ENCODE measurements at regions of chr15 and their contacts with region 1.

Region 1: DNA sequence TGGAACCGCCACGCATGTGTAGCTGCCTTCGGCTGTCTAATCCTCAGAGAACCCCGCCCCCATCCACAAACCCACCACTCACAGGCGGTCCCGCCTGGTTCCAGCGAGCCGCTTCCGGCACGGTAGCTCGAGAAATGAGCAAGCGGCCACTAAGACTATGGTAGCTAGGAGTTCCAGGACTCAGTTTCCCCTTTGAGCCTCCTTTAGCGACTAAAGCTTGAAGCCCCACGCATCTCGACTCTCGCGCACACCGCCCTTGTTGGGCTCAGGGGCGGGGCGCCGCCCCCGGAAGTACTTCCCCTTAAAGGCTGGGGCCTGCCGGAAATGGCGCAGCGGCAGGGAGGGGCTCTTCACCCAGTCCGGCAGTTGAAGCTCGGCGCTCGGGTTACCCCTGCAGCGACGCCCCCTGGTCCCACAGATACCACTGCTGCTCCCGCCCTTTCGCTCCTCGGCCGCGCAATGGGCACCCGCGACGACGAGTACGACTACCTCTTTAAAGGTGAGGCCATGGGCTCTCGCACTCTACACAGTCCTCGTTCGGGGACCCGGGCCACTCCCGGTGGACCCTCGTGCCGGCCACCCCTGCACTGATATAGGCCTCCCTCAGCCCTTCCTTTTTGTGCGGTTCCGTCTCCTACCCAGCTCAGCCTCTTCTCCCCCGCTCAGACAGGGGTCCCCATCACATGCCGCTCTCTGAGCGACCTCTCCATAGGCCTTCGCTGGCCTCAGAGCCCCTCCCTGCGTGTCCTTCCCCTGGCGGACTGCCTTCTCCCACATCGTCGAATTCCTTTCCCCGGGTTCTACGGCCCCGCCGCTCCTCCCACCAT is at the start of gene RAB11A:
- DNase-seq: peak; percentile 94
- H3K4me3 Mint-ChIP-seq: peak within 1 kb of the TSS; percentile 99
- H3K27ac Mint-ChIP-seq: peak within 1 kb of the TSS; percentile 93
- H3K4me1 Mint-ChIP-seq: peaks cover 31% of the 10 kb centered on the region
- H3K27me3 Mint-ChIP-seq: peaks cover 4% of the 10 kb centered on the region
- total RNA-seq, gene RAB11A: 161 and 171 TPM in 2 replicates

Region 2: DNA sequence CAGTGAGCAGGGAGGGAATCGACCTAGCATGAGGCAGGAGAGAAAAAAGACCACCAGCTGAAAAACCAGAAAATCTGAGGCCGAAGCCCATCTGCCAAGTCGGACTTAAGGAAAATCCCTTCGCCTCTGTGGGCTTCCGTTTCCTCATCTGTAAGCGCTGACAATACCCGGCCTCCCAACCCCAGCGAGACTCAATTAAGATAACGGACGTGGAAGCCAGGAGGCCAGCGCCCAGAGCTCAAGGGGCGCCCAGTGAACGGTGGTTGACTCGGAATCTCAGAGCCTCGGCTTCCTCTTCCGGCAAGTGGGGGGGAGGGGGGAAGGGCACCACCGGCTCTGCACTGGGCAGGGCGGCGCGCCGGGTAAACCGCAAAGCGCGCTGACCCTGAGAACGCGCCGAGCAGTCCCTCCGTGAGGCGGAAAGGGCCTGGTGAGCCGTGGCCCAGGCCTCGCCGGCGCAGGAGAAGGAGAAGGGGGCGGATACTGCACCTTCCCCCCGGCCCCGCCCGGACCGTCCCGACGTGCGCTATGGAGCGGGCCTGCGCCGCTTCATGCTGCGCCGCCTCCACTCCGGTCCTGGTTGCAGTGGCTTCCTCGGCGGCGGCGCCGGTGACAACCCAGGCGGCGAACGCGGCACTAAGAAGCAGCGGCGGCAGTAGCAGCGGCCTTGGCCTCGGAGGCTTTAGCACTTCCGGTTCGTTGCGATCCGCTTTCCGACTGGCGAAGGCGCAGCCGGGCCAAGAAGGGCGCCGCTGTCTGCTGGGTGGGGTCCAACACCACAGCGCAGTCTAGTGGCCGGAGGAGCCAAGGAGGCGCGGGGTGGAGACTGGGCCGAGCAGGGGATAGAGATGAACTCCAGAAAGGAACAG is 352.1 kb before region 1 on chr15 and contains the start of gene DPP8:
- intact Hi-C with region 1: loop called (anchors 2 kb)
- DNase-seq: peak; percentile 92
- H3K4me3 Mint-ChIP-seq: peak within 1 kb of the TSS; percentile 90
- H3K27ac Mint-ChIP-seq: peak within 1 kb of the TSS; percentile 90
- H3K4me1 Mint-ChIP-seq: peaks cover 32% of the 10 kb centered on the region
- H3K27me3 Mint-ChIP-seq: no peaks in the 10 kb centered on the region
- total RNA-seq, gene DPP8: 34.8 and 35.6 TPM in 2 replicates

Region 3: GRCh38 chr15:65881766-65882434 is 12.6 kb after region 1 on chr15:
- intact Hi-C with region 1: loop called (anchors 1 kb)
- DNase-seq: no peak
- H3K4me3 Mint-ChIP-seq: peak overlapping the region; percentile 28
- H3K27ac Mint-ChIP-seq: peak overlapping the region; percentile 11
- H3K4me1 Mint-ChIP-seq: peaks cover 71% of the 10 kb centered on the region
- H3K27me3 Mint-ChIP-seq: no peaks in the 10 kb centered on the region

Region 4: DNA sequence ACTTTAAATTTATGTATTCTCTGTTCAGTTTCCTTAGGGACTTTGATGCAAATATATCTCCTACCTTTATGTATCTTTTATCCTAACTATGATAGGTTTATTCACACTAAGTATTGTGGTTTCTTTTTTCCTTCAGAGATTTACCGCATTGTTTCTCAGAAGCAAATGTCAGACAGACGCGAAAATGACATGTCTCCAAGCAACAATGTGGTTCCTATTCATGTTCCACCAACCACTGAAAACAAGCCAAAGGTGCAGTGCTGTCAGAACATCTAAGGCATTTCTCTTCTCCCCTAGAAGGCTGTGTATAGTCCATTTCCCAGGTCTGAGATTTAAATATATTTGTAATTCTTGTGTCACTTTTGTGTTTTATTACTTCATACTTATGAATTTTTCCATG is 18.2 kb after region 1 on chr15:
- intact Hi-C with region 1: loop called (anchors 1 kb)
- DNase-seq: peak; percentile 64
- H3K4me3 Mint-ChIP-seq: peak overlapping the region; percentile 65
- H3K27ac Mint-ChIP-seq: peak overlapping the region; percentile 90
- H3K4me1 Mint-ChIP-seq: peaks cover 86% of the 10 kb centered on the region
- H3K27me3 Mint-ChIP-seq: no peaks in the 10 kb centered on the region

Region 5: GRCh38 chr15:65916664-65917406 is 47.5 kb after region 1 on chr15:
- intact Hi-C with region 1: loop called (anchors 1 kb)
- DNase-seq: peak; percentile 71
- H3K4me3 Mint-ChIP-seq: peak overlapping the region; percentile 37
- H3K27ac Mint-ChIP-seq: peak overlapping the region; percentile 83
- H3K4me1 Mint-ChIP-seq: peaks cover 55% of the 10 kb centered on the region
- H3K27me3 Mint-ChIP-seq: no peaks in the 10 kb centered on the region

Region 6: DNA sequence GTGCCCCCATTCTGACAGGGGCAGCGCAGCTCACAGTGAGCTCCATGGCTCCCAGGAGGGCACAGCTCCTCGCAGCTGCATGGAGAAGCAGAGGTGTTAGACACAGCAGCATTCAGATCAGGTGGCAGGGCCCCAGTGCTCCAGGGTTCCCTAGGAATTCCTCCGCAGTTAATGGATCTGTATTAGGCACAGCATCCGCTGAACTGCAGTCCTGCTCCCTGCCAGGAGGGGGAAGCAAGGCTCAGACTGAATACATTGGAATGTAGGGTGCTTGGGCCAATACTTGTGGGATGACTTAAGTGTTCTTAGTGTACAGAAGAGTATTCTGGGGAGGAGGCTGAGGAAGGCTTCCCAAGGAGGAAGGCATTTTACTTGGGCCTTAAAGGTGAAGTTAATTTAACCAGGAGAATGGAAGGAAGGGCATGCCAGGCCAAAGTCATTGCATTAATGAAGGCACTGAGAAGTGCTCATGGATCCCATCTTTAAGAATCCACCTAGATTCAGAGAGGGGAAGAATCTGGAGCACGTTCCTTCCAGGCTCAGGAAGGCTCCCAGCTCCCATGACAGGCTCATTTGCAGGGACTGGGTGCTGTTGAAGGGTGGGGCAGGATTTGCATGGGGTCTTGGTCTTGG is 111.6 kb after region 1 on chr15:
- intact Hi-C with region 1: loop called (anchors 5 kb)
- DNase-seq: peak; percentile 6
- H3K4me3 Mint-ChIP-seq: peak overlapping the region; percentile 16
- H3K27ac Mint-ChIP-seq: no peak overlapping the region
- H3K4me1 Mint-ChIP-seq: no peaks in the 10 kb centered on the region
- H3K27me3 Mint-ChIP-seq: peaks cover 47% of the 10 kb centered on the region

Measured in activated T-helper 1 cell treated with anti-CD3 and anti-CD28 coated beads, Interleukin-12 subunit alpha, Interleukin-12 subunit beta, Interleukin-2, Interleukin-4 antibody, amounts not matched to agents 30 ng/mL and 10 ng/mL and 1 ng/mL, durations not matched to agents 14 hours and 24 hours and 36 hours (primary cell).